ENCODE measurements at regions of chr14 and their contacts with region 1.

Region 1: GRCh38 chr14:24093901-24094761 is at the start of gene PCK2:
- DNase-seq: peak; percentile 98
- ATAC-seq: peak; percentile 93
- H3K4me3 Mint-ChIP-seq: peak within 1 kb of the TSS; percentile 98
- H3K27ac Mint-ChIP-seq: peak within 1 kb of the TSS; percentile 98
- H3K4me1 Mint-ChIP-seq: peaks cover 32% of the 10 kb centered on the region
- H3K27me3 Mint-ChIP-seq: peaks cover 10% of the 10 kb centered on the region
- CTCF ChIP-seq: no peak
- total RNA-seq, gene PCK2: 51.2 to 67.0 TPM (median 59.2 TPM) in 3 replicates

Region 2: DNA sequence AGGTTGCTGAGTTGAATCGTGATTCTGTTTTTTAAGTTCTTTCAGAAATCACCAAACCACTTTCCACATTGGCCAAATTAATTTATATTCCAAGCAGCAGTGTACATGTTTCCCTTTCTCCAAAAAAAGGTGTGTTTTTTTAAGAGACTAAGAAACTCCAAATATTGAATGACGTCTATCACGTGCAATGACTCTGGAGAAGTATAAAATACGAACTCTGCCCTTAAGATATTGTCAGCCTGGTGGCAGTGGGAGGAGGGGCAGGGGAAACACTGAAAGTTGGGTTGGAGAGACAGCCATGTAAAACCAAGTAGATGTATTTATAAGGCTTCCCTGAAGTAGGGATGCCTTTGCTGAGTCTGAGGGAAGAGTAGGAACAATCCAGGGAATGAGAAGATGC is 190.7 kb before region 1 on chr14:
- CTCF ChIA-PET with region 1: no interaction called
- POLR2A ChIA-PET with region 1: no interaction called
- DNase-seq: no peak
- ATAC-seq: no peak
- H3K4me3 Mint-ChIP-seq: no peak overlapping the region
- H3K27ac Mint-ChIP-seq: no peak overlapping the region
- H3K4me1 Mint-ChIP-seq: no peaks in the 10 kb centered on the region
- H3K27me3 Mint-ChIP-seq: peaks cover 10% of the 10 kb centered on the region
- CTCF ChIP-seq: no peak

Region 3: GRCh38 chr14:24051789-24052655 is 42.1 kb before region 1 on chr14 and contains the start of gene CARMIL3:
- CTCF ChIA-PET with region 1: interaction called, 320 read pairs
- POLR2A ChIA-PET with region 1: interaction called, 38 read pairs
- DNase-seq: peak; percentile 85
- ATAC-seq: peak; percentile 81
- H3K4me3 Mint-ChIP-seq: peak within 1 kb of the TSS; percentile 76
- H3K27ac Mint-ChIP-seq: peak within 1 kb of the TSS; percentile 58
- H3K4me1 Mint-ChIP-seq: peaks cover 18% of the 10 kb centered on the region
- H3K27me3 Mint-ChIP-seq: peaks cover 3% of the 10 kb centered on the region
- CTCF ChIP-seq: no peak
- total RNA-seq, gene CARMIL3: 10.6 to 13.0 TPM (median 11.4 TPM) in 3 replicates

Region 4: DNA sequence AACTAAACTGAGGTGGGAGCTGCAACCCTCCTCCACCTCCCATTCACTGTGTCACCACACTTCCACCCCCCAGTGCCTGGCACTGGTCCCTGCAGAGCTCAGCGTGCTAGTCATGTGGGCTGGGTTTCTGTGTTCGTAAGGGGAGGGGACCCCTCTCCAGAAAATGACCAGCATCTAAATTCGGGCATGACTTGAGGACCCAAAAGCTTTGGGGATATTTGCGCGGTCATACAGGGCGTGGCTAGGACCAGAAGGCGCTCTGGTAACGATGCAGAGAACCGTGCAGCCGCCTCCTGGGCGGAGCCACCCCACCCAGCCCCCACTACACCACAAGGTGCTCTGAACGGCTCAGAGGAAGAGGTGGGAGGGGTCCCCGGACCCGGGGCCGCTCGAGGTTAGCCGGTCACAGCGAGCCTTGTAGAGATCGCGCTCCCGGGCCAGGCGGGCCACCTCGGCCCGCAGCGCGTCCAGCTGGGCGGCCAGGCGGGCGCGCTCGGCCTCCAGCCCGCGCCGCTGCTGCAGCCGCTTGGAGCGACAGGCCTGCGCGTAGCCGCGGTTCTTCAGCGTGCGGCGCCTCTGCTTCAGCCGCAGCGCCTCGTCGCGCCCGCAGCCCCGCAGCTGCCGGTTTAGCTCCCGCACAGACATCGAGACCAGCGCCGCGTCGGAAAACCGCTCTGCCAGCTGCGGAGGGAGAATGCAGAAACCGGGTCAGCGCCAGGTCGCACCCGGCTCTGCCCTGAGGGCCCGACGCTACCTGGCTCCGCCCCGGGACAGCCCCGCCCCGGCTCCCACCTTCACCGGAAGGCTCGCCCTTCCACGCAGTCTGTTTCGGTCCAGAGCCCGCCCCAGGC is 13.0 kb before region 1 on chr14:
- CTCF ChIA-PET with region 1: interaction called, 57 read pairs
- POLR2A ChIA-PET with region 1: interaction called, 67 read pairs
- DNase-seq: peak; percentile 69
- ATAC-seq: peak; percentile 76
- H3K4me3 Mint-ChIP-seq: peak overlapping the region; percentile 79
- H3K27ac Mint-ChIP-seq: peak overlapping the region; percentile 21
- H3K4me1 Mint-ChIP-seq: peaks cover 32% of the 10 kb centered on the region
- H3K27me3 Mint-ChIP-seq: peaks cover 26% of the 10 kb centered on the region
- CTCF ChIP-seq: no peak

Region 5: GRCh38 chr14:24146978-24147760 is 53.0 kb after region 1 on chr14 and contains the start of gene RNF31:
- CTCF ChIA-PET with region 1: interaction called, 3 read pairs
- POLR2A ChIA-PET with region 1: interaction called, 20 read pairs
- DNase-seq: peak; percentile 98
- ATAC-seq: peak; percentile 89
- H3K4me3 Mint-ChIP-seq: peak within 1 kb of the TSS; percentile 99
- H3K27ac Mint-ChIP-seq: peak within 1 kb of the TSS; percentile 98
- H3K4me1 Mint-ChIP-seq: peaks cover 21% of the 10 kb centered on the region
- H3K27me3 Mint-ChIP-seq: no peaks in the 10 kb centered on the region
- CTCF ChIP-seq: no peak
- total RNA-seq, gene RNF31: 63.0 to 86.2 TPM (median 68.4 TPM) in 3 replicates